Mammary epithelial cell (primary cell): ENCODE measurements at regions of chr21 and their contacts with region 1.

Region 1: DNA sequence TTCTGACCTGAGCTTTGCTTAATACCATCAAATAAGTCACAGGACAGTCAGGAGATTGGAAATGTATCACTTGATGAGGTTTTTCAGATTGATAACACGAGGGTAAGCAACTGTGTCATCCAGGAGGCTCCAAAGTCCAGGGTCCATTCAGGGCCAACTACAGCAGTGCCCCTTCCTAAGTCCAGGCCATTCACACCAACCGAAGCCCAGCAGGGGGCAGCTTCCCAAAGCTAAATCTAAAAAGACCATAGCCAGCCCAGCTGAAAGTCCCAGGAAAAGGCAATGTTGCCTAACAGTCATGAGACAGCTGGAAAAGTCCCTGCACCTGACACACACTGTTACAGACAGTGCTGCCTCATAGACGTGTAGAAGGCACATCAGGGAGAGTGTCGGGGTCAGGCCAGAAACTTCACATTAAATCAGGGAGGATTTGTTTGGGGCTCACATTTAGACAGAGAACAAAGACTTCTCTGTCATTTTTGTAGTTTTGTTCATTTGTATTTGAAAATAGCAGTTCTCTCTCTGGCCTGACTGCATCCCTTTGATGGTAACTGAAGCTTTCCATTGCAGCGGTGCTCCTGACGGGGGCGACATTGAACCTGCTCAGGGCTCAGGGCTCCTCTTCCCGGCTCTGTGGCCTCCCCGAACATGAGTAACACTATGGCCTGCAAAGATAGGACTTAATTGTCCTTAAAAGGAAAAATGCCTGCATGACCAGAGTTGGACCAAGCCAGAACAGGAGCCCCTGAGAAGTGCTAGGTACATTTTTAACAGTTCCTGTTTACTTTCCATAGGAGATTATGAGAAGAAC is 200.4 kb downstream of the NRIP1 start:
- DNase-seq: peak; percentile 81
- H3K4me3 ChIP-seq: no peak overlapping the region
- H3K27ac ChIP-seq: no peak overlapping the region
- H3K4me1 ChIP-seq: peaks cover 17% of the 10 kb centered on the region
- H3K27me3 ChIP-seq: no peaks in the 10 kb centered on the region
- CTCF ChIP-seq: peak; percentile 61 to 74

Region 2: DNA sequence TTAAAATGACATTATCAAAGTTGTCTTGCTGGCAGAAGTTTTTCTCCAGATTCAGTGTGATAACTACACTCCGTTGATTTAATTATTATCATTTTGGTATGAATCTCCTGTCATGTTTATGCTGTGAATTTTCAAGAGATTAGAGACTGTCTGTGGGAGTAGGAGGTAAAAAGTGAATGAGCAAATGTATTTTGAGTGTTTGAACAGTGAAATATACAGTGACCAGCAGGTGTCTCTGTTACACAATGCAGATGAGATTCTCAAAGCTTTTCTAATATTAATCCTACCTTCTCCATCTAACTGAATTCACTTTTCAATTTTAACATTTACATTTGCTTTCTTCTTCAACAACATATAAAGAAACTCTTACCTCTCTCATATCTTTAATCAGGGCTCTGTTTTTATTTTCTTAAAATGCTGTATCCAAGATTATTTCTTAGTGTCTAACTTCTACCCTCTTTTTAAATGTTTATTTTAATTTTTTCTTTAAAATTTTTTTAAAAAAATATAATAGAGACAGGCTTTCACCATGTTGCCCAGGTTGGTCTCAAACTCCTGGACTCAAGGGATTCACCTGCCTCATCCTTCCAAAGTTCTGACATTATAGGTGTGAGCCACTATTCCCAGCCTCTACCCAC is 460.6 kb before region 1 on chr21:
- CTCF ChIA-PET with region 1: no interaction called
- dilution Hi-C with region 1: no loop called
- in situ Hi-C with region 1: no loop called
- intact Hi-C with region 1: loop called (anchors 10 kb)
- DNase-seq: peak; percentile 12
- H3K4me3 ChIP-seq: no peak overlapping the region
- H3K27ac ChIP-seq: no peak overlapping the region
- H3K4me1 ChIP-seq: no peaks in the 10 kb centered on the region
- H3K27me3 ChIP-seq: no peaks in the 10 kb centered on the region
- CTCF ChIP-seq: peak; percentile 55 to 63

Region 3: DNA sequence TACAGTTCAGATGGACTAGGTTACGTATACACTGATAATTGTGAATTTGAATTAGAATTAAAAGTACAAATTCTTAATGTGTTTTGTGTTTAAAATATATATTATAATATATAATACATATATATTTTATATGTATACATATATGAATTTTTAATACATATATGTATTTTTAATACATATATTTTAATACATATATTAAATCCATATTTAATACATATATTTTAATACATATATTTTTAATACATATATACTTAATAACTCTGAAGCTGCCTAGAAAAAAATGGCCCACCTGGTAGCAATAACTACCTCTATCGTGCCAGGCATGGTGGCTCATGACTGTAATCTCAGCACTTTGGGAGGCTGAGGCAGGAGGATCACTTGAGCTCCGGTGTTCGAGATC is 139.2 kb before region 1 on chr21:
- CTCF ChIA-PET with region 1: no interaction called
- dilution Hi-C with region 1: no loop called
- in situ Hi-C with region 1: no loop called
- intact Hi-C with region 1: no loop called
- DNase-seq: no peak
- H3K4me3 ChIP-seq: no peak overlapping the region
- H3K27ac ChIP-seq: no peak overlapping the region
- H3K4me1 ChIP-seq: no peaks in the 10 kb centered on the region
- H3K27me3 ChIP-seq: no peaks in the 10 kb centered on the region
- CTCF ChIP-seq: no peak

Region 4: GRCh38 chr21:14773777-14774345 is 90.6 kb before region 1 on chr21:
- CTCF ChIA-PET with region 1: no interaction called
- dilution Hi-C with region 1: no loop called
- in situ Hi-C with region 1: no loop called
- intact Hi-C with region 1: no loop called
- DNase-seq: peak; percentile 30
- H3K4me3 ChIP-seq: no peak overlapping the region
- H3K27ac ChIP-seq: no peak overlapping the region
- H3K4me1 ChIP-seq: no peaks in the 10 kb centered on the region
- H3K27me3 ChIP-seq: peaks cover 3% of the 10 kb centered on the region
- CTCF ChIP-seq: peak; percentile 59 to 85

Region 5: DNA sequence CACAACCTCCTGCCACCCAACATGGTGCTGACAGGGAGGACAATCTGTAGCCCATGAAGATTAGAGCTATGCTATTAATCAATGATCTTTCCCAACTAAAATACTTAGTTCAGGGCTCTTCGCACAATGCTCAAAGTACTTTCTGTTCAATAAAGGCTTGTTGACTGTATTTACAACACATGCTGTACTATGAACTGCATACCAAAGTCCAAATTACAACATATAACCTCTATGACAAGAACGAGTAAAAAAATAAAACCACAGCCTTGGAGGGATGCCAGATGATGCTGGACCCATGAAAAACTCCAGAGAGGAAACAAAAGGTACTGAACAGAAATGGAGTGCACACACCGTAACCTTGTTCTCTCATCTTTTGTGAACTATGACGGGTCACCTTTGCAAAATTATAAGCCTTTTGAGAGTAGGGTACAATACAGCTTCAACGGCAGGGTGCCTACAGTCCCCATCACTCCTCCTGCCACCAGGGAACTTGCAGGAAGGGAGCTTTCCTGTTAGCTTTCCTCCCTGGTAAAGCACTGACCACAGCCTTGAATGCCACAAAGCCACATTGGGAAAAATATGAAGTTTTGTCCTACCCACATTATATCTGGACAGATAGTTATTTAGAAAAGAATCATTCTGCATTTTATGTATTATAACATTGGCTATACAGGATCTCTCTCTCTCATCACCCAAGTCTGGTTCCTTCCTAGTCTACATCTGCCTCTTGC is 24.8 kb after region 1 on chr21:
- CTCF ChIA-PET with region 1: no interaction called
- dilution Hi-C with region 1: no loop called
- in situ Hi-C with region 1: no loop called
- intact Hi-C with region 1: no loop called
- DNase-seq: peak; percentile 69
- H3K4me3 ChIP-seq: no peak overlapping the region
- H3K27ac ChIP-seq: no peak overlapping the region
- H3K4me1 ChIP-seq: peaks cover 16% of the 10 kb centered on the region
- H3K27me3 ChIP-seq: no peaks in the 10 kb centered on the region
- CTCF ChIP-seq: no peak

Region 6: DNA sequence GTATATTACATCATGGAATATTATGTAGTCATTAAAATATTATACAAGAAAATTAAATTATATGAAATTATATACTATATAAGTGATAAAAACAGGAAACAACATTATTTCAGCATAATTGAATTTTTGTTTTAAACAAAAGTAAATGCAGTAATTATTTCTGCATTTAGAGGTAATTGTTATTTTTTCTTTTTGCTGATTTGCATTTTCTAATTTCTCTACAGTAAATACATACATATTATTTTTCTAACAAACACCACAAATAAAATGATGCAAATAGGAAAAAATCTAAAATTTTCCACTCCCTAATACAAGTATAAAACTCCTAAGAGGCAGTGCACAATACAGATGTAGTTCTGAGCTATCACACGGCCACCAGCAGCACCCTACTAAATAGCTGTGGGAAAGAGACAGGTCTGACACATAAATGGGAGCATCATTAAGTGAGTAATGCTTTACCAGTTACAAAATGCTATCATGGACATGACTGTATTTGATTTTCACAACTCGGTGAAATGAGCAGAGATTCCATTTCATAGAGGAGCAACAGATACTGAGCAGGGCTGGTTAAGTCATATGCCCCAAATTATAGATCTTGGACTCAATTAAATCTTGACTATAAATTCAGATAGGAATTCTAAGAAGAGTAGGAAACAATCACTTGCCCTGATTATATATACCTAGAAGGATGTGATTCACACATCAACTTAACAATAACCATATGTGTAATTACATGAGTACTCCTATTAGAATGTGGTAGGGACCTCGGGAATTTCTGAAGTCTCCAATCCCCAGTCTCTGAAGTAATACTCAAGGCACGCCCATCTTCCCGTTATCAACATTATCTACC is 151.4 kb after region 1 on chr21:
- CTCF ChIA-PET with region 1: no interaction called
- dilution Hi-C with region 1: no loop called
- in situ Hi-C with region 1: no loop called
- intact Hi-C with region 1: loop called (anchors 1 kb)
- DNase-seq: peak; percentile 84
- H3K4me3 ChIP-seq: no peak overlapping the region
- H3K27ac ChIP-seq: peak overlapping the region; percentile 80
- H3K4me1 ChIP-seq: peaks cover 10% of the 10 kb centered on the region
- H3K27me3 ChIP-seq: no peaks in the 10 kb centered on the region
- CTCF ChIP-seq: no peak

Region 7: GRCh38 chr21:15164678-15165303 is 300.4 kb after region 1 on chr21:
- CTCF ChIA-PET with region 1: no interaction called
- dilution Hi-C with region 1: no loop called
- in situ Hi-C with region 1: no loop called
- intact Hi-C with region 1: loop called (anchors 1 kb)
- DNase-seq: peak; percentile 79
- H3K4me3 ChIP-seq: no peak overlapping the region
- H3K27ac ChIP-seq: no peak overlapping the region
- H3K4me1 ChIP-seq: peaks cover 13% of the 10 kb centered on the region
- H3K27me3 ChIP-seq: no peaks in the 10 kb centered on the region
- CTCF ChIP-seq: no peak

Region 8: GRCh38 chr21:15483138-15483780 is 618.8 kb after region 1 on chr21:
- CTCF ChIA-PET with region 1: interaction called, 5 read pairs
- dilution Hi-C with region 1: no loop called
- in situ Hi-C with region 1: loop called in 1 of 2 experiments (anchors 25 kb)
- intact Hi-C with region 1: loop called (anchors 1 kb)
- DNase-seq: peak; percentile 78
- H3K4me3 ChIP-seq: no peak overlapping the region
- H3K27ac ChIP-seq: no peak overlapping the region
- H3K4me1 ChIP-seq: peaks cover 4% of the 10 kb centered on the region
- H3K27me3 ChIP-seq: no peaks in the 10 kb centered on the region
- CTCF ChIP-seq: peak; percentile 90

Region 9: GRCh38 chr21:15592271-15592860 is 728.0 kb after region 1 on chr21:
- CTCF ChIA-PET with region 1: no interaction called
- dilution Hi-C with region 1: no loop called
- in situ Hi-C with region 1: loop called in 1 of 2 experiments (anchors 25 kb)
- intact Hi-C with region 1: loop called (anchors 1 kb)
- DNase-seq: peak; percentile 35
- H3K4me3 ChIP-seq: no peak overlapping the region
- H3K27ac ChIP-seq: no peak overlapping the region
- H3K4me1 ChIP-seq: no peaks in the 10 kb centered on the region
- H3K27me3 ChIP-seq: no peaks in the 10 kb centered on the region
- CTCF ChIP-seq: peak; percentile 50 to 63